HEK293T (cell line): ENCODE measurements at regions of chr6 and their contacts with region 1.

Region 1: DNA sequence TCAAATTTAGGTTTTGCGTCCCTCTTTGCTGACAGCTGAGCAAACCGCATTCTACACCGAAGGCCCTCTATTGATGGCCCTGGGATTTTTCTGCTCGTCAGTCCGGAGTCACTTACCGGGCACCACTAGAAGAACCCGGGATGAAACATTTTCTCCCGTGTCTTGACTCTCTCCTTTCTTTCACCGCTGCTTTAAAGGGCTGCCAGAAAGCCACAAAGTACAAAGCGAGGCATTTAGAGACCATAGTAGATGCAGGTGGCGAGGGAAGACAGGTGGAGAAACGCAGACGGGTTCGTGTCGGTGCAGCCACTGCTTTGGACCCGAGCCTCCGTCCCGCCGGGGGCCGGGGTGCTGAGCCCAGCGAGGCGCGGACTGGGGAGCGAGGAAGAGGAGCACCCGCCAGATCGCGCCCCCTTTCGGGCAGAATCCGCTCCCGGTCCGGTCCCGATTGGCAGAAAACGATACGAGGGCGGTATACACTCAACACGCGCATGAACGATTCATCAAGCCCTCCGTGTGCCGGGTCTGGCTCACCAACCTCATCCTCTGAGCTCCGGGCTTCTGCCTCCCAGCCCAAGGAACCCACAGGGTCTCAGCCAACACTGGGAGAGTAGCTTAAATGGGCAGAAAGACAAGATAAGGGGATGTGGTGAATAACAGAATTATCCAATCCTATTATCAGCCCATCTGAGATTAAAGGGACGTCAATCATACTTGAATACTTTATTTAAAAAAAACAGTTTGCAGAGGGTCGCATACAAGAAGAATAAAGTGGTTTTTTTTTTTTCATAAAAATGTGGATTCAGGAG is 84.9 kb downstream of the TRIM27 start:
- DNase-seq: peak; percentile 70

Region 2: GRCh38 chr6:28769626-28770402 is 69.0 kb before region 1 on chr6:
- CTCF ChIA-PET with region 1: interaction called, 30 read pairs
- POLR2A ChIA-PET with region 1: interaction called, 5 read pairs
- DNase-seq: no peak

Region 3: GRCh38 chr6:28816909-28817807 is 21.7 kb before region 1 on chr6:
- CTCF ChIA-PET with region 1: interaction called, 11 read pairs
- POLR2A ChIA-PET with region 1: interaction called, 13 read pairs
- DNase-seq: peak; percentile 58

Region 4: DNA sequence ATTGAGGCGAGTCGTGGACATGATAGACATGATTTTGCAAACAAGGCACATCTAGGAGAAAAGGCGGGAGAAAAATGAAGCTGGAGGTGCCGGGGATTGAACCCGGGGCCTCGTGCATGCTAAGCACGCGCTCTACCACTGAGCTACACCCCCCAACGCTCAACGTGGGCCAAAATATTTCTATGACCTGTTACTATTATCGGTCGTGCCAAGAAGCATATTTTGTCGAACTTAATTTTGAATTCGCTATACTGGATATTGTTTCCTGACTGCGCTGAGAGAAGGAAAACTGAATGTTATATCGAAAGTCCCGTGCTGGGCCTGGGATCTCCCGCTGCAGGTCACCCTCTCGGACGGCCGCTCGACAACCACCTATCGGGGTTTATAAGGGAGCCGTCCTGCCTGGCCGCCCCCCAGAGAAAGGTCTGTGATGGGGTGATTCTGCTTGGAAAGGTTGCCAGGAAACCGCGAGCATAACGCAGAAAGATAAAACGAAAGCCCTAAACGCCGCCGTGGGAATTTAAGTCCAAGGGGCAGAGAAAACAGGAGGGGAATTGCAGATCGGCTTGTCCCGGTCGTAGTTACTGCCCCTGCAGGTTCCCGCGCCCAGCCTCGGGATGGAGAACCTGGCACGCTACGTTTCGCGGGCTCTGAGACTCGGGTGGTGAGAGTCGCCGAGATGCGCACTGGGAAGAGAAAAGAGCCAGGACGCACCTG is 24.9 kb after region 1 on chr6:
- CTCF ChIA-PET with region 1: interaction called, 14 read pairs
- POLR2A ChIA-PET with region 1: interaction called, 51 read pairs
- DNase-seq: peak; percentile 49

Region 5: GRCh38 chr6:28940858-28941680 is 102.2 kb after region 1 on chr6:
- CTCF ChIA-PET with region 1: interaction called, 12 read pairs
- POLR2A ChIA-PET with region 1: interaction called, 6 read pairs
- DNase-seq: peak; percentile 51

Region 6: GRCh38 chr6:29016559-29017427 is 178.0 kb after region 1 on chr6:
- CTCF ChIA-PET with region 1: interaction called, 10 read pairs
- POLR2A ChIA-PET with region 1: interaction called, 10 read pairs
- DNase-seq: peak; percentile 71